Sigmoid colon (tissue), 7 donors: ENCODE measurements at regions of chr13 and their contacts with region 1.

Region 1: GRCh38 chr13:33040090-33040489 is 23.9 kb downstream of the KL start:
- DNase-seq: no peak
- H3K4me3 ChIP-seq: no peak overlapping the region
- H3K27ac ChIP-seq: peak overlapping the region; percentile 55 to 80 (median 76)
- H3K4me1 ChIP-seq: peaks cover 0 to 36% (median 22%) of the 10 kb centered on the region in 4 donors
- H3K27me3 ChIP-seq: no peaks in the 10 kb centered on the region
- CTCF ChIP-seq: no peak
- EP300 ChIP-seq: no peak
- POLR2A ChIP-seq: no peak

Region 2: DNA sequence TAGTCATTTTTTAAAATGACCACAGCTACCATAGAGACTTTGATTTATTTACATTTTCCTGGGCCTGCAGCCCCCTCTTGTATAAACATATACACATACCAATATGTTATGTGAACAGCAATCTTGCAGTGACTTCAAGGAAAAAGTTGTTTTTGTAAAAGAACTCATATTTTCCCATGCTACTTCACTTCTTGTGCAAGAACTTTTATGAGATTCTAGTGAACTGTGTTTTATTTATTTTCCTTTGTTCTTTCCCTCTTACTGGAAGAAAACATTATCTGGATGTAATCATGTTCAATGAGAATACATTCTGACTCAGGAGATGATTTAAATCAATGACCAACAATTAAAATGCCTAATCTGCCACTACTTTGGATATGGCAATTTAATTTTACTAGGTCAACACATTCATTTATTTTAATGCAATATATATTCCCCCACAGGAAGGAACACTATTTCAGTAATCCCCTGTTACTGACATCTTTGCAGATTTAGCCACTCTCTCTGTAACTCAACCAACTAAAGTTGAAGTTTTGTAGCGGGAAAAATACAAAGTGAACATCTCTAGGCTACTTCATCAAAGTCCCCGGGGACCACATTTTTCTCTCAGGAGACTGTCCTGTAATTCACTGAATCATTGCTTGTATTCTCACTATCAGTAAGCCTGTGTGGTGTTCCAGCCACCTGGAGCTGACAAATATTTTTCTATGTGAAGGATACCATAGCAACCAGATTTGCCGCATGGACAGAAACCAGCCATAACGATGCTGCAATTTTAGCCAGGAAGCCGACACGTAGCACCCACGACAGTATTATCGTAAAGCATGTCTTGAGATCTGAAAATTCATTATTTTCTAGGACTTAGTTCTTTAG is 155.0 kb after region 1 on chr13:
- intact Hi-C with region 1: loop called (anchors 5 kb)
- DNase-seq: no peak
- H3K4me3 ChIP-seq: no peak overlapping the region
- H3K27ac ChIP-seq: peak overlapping the region; percentile 51 to 88 (median 76)
- H3K4me1 ChIP-seq: peaks cover 0 to 99% (median 90%) of the 10 kb centered on the region in 4 donors
- H3K27me3 ChIP-seq: no peaks in the 10 kb centered on the region
- CTCF ChIP-seq: no peak
- EP300 ChIP-seq: peak in 1 of 4 donors; percentile 44
- POLR2A ChIP-seq: no peak

Region 3: DNA sequence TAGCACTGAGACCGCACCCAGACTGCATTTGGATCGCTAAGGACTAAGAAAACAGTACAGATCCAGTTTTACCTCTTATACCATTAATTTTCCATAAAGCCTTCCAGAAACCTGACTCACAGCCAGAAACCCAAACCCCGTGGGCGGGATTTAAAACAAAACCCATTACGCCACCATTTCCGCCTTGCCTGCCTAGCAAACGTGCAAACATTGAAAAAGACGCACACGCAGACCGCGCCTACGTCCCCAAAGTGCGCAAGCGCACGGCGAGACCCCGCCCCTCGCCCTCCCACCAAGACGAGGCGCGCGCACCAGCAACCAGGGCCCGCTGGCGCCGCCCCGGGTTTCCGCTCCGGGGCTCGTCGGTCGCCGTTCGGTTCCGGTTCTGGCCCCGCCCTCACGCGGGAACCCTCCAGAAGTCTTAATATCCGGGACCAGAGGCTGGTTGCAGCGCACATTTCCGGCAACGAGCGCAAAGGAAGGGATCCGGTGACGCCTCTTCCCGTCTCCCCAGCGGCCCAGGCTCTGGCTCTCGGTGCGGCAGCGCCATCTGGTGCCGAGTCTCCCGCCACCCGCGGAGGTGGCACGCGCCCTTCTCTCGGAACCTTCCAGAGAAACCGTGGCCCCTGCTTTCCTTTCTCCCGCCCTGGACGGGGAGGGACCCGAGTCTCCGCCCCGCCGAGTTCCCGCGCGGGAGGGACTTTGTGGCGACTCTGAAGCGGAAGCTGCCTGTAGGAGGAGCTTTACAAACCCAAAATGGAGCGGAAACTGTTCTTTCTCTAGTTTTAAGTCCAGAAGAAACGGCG is 502.4 kb after region 1 on chr13:
- intact Hi-C with region 1: no loop called
- DNase-seq: peak; percentile 99
- H3K4me3 ChIP-seq: peak overlapping the region; percentile 34 to 54 (median 46)
- H3K27ac ChIP-seq: peak overlapping the region; percentile 91 to 96 (median 95)
- H3K4me1 ChIP-seq: peaks cover 0 to 51% (median 49%) of the 10 kb centered on the region in 4 donors
- H3K27me3 ChIP-seq: no peaks in the 10 kb centered on the region
- CTCF ChIP-seq: peak in 3 of 4 experiments; percentile 82 to 89 (median 84)
- EP300 ChIP-seq: peak; percentile 64 to 90 (median 88)
- POLR2A ChIP-seq: peak; percentile 54 to 61